Panc1 (cell line): ENCODE measurements at regions of chr4 and their contacts with region 1.

Region 1: DNA sequence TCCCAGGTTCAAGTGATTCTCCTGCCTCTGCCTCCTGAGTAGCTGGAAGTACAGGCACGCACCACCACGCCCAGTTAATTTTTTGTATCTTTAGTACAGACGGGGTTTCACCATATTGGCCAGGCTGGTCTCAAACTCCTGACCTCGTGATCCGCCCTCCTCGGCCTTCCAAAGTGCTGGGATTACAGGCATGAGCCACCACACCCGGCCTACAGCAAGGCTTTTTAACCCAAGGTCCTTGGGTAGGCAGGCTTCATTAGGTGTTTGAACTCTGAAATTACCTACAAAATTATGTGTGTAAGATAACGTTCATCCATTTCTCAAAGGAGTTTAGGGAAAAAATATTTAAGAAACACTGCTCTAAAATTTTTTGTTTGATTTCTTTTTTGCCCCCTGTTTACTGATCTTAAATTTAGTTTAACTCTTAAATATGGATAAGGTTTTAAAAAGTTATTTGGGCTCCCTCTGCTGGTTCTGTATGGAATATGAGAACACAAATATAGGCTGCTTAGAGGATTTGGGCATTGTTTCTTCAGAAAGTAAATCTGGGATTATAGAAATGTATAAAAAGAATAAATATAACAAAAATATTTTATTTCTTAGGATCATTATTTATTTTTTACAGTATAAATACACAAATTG is 92.8 kb downstream of the CBR4 start:
- DNase-seq: peak; percentile 5
- ATAC-seq: no peak
- H3K4me3 ChIP-seq: no peak overlapping the region
- H3K27ac ChIP-seq: no peak overlapping the region
- H3K4me1 ChIP-seq: no peaks in the 10 kb centered on the region
- H3K27me3 ChIP-seq: no peaks in the 10 kb centered on the region
- CTCF ChIP-seq: peak; percentile 47; the same call in 1 of the 2 replicates

Region 2: DNA sequence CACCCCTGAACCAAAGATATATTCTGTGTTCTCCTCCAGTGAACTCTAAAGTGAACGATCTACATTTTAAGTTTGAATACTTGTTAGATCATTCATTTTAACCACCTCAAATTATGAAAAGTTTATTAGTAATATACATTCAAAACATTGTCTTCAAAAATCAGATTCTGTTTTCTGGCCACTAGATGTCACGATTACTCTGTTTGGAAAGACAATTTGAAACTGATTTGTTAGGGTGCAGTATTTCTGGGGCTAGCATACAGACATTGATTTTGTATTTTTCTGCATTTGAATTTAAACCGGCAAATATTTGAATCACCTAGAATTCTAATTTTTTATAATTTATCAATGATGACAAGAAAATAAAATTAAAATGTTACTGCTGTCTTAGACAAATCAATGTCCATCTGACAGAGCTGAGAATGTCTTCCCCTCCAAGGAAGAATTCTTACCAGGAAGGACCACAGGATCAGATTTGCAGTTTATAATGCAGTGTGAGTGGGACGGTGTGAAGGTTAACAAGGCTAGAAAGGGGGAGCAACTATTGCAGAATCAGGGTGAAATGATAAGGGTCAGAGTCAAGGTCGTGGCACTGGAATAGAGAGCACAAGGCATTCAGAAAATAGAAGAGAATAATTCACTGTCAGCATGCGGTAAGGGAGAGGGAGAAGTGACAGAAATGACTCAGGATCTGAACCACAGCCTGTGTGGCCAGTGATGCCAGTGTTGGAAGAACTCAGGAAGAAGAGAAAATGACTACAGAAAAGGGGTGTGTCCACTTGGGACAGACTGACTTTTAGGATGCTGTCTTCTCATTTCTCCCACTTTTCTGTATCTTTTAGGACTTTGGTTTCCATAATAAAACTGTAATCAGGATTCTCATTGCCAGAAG is 733.3 kb before region 1 on chr4:
- CTCF ChIA-PET with region 1: no interaction called
- POLR2A ChIA-PET with region 1: no interaction called
- in situ Hi-C with region 1: no loop called
- intact Hi-C with region 1: loop called (anchors 5 kb)
- DNase-seq: peak; percentile 24
- ATAC-seq: no peak
- H3K4me3 ChIP-seq: no peak overlapping the region
- H3K27ac ChIP-seq: no peak overlapping the region
- H3K4me1 ChIP-seq: no peaks in the 10 kb centered on the region
- H3K27me3 ChIP-seq: no peaks in the 10 kb centered on the region
- CTCF ChIP-seq: peak; percentile 64; the same call in 1 of the 2 replicates

Region 3: GRCh38 chr4:168514249-168514852 is 402.9 kb before region 1 on chr4:
- CTCF ChIA-PET with region 1: no interaction called
- POLR2A ChIA-PET with region 1: no interaction called
- in situ Hi-C with region 1: no loop called
- intact Hi-C with region 1: loop called (anchors 10 kb)
- DNase-seq: no peak
- ATAC-seq: no peak
- H3K4me3 ChIP-seq: no peak overlapping the region
- H3K27ac ChIP-seq: no peak overlapping the region
- H3K4me1 ChIP-seq: no peaks in the 10 kb centered on the region
- H3K27me3 ChIP-seq: no peaks in the 10 kb centered on the region
- CTCF ChIP-seq: peak; percentile 44; the same call in 1 of the 2 replicates

Region 4: DNA sequence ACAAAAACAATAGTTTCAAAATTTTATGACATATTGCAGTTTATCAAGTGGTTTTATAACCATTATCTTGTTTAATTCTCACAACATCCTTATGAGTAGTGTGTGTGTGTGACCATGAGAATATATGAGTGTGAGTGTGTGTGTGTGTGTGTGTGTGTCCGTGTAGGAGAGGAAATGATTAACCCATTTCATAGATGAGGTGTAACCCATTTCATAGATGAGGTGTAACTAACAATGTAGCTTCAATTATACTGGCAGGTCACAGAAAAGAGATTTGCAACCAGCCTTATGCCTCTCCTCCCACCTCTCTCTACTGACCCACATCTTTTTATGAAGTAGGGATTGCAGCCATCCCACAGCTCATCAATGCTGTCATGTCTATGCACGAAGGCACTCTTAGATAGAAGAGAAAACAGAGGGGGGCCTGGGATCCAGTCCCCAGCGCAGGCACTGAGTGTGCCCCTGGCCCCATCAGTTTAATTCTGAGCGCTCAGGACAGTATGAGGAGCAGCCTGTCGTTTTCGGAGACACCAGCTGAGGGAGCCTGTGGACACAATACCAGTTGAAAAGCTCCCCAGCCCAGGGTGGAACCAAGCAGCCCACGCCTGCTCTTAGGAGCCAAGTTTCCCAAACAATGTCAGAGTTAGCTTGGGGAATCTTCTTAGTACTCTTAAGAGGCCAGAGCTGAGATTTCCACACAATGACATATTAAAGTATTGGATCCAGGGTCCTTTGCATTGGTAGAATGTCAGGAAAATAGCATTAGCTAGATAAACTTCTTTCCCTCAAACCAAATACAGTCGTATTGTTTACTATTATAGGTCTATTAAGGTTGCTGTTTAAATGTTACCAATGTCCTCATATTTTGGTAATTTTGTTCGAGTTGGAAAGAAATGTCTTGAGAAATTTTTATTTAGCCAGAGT is 331.8 kb before region 1 on chr4:
- CTCF ChIA-PET with region 1: interaction called, 5 read pairs
- POLR2A ChIA-PET with region 1: no interaction called
- in situ Hi-C with region 1: no loop called
- intact Hi-C with region 1: loop called (anchors 5 kb)
- DNase-seq: no peak
- ATAC-seq: peak; percentile 96
- H3K4me3 ChIP-seq: no peak overlapping the region
- H3K27ac ChIP-seq: no peak overlapping the region
- H3K4me1 ChIP-seq: peaks cover 2% of the 10 kb centered on the region; the same call in 1 of the 2 replicates
- H3K27me3 ChIP-seq: no peaks in the 10 kb centered on the region
- CTCF ChIP-seq: peak; percentile 76

Region 5: DNA sequence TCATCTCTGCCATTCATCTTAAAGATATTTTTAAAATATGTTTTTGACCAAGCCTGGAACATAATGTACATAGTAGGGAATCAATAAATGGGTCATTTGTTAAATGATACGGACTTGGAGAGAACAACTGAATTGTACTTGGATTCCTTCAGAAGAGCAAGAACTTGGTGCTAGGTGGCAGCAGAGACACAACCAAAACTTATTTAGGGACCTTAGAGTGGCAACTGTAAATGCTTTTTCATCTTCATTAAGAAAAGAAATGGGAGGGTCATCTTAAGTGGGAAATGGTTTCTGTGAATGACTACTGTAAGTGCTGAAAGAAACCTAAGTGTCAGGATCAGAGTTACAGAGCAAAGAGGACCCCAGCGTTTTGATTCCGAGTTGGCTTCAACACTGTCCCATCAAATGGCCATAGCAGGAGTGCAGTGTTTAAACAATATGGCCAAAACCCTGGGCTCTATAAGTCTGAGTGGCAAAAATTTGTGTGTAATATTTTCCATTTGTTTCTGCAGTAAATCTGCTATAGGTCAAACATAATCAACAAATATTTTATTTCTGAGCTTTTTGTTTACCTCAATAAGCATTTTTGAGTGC is 206.8 kb before region 1 on chr4:
- CTCF ChIA-PET with region 1: interaction called, 3 read pairs
- POLR2A ChIA-PET with region 1: no interaction called
- in situ Hi-C with region 1: no loop called
- intact Hi-C with region 1: loop called (anchors 5 kb)
- DNase-seq: peak; percentile 27
- ATAC-seq: no peak
- H3K4me3 ChIP-seq: no peak overlapping the region
- H3K27ac ChIP-seq: no peak overlapping the region
- H3K4me1 ChIP-seq: no peaks in the 10 kb centered on the region
- H3K27me3 ChIP-seq: no peaks in the 10 kb centered on the region
- CTCF ChIP-seq: peak; percentile 59

Region 6: DNA sequence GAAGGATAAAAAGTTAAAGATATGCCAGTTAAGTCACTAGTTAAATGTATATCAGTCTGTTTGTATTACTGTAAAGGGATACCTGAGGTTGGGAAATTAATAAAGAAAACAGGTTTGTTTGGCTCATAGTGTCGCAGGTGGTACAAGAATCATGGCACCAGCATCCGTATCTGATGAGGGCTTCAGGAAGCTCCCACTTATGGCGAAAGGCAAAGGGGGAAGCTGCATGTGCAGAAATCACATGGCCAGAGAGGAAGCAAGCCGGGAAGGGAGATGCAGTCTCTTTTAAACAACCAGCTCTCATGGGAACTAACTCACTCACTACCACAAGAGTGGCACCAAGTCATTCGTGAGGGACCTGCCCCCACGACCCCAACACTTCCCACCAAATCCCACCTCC is 445.3 kb after region 1 on chr4:
- CTCF ChIA-PET with region 1: no interaction called
- POLR2A ChIA-PET with region 1: no interaction called
- in situ Hi-C with region 1: no loop called
- intact Hi-C with region 1: no loop called
- DNase-seq: no peak
- ATAC-seq: no peak
- H3K4me3 ChIP-seq: no peak overlapping the region
- H3K27ac ChIP-seq: no peak overlapping the region
- H3K4me1 ChIP-seq: peaks cover 7% of the 10 kb centered on the region; the same call in 1 of the 2 replicates
- H3K27me3 ChIP-seq: no peaks in the 10 kb centered on the region
- CTCF ChIP-seq: no peak